PC-3 (cell line): ENCODE measurements at regions of chr7 and their contacts with region 1.

Region 1: DNA sequence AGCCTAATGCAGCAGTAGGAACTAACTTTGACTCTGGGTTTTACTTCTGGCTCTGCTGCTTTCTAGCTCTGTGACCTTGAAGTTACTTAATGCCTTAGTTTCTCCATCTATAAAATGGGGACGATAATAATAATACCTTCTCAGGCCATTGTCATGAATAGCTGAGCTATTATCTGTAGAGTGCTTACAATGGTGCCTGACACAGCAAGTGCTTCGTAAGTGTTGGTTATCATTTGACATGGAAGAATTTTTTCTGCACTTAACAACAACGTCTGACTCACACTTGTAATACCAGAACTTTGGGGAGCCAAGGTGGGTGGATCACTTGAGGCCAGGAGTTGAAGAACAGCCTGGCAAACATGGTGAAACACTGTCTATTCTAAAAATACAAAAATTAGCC is 140.5 kb downstream of the ARL4A start:
- DNase-seq: peak; percentile 36
- ATAC-seq: no peak
- H3K4me3 ChIP-seq: no peak overlapping the region
- H3K27ac ChIP-seq: peak overlapping the region; percentile 58
- H3K4me1 ChIP-seq: peaks cover 16% of the 10 kb centered on the region
- H3K27me3 ChIP-seq: no peaks in the 10 kb centered on the region
- CTCF ChIP-seq: no peak

Region 2: DNA sequence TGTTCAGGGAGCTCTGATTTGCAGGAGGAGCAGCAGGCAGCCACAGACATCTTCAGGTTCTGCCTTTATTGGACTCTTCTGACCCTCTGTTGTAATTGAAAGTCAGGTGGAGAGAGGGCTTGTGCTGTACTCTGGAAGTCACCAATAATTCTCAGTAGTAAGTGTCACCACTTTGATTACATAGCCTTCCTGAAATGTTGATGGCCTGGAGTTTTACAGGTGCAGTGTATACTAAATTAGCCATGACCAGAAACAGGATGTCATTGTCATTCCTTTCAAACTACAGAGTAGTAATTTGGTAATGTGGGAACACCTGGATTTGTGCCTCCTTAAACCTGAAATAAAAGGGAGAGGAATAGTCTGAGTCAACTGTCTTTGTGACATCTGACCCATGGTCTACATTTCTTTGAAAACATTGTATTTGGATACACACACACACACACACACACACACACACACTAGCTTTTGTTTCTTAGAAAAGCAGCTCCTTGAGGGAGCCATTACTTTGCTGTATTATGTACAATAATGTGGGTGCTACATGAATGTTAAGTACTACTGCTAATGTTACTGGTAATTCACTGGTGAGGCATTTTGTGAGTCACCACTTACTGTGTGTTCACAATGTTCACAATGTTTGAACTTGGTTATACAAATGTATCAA is 120.9 kb before region 1 on chr7:
- CTCF ChIA-PET with region 1: no interaction called
- POLR2A ChIA-PET with region 1: no interaction called
- intact Hi-C with region 1: loop called (anchors 2 kb)
- DNase-seq: peak; percentile 91
- ATAC-seq: peak; percentile 84
- H3K4me3 ChIP-seq: peak overlapping the region; percentile 26; the same call in 1 of the 2 replicates
- H3K27ac ChIP-seq: peak overlapping the region; percentile 85
- H3K4me1 ChIP-seq: peaks cover 57% of the 10 kb centered on the region
- H3K27me3 ChIP-seq: no peaks in the 10 kb centered on the region
- CTCF ChIP-seq: no peak

Region 3: DNA sequence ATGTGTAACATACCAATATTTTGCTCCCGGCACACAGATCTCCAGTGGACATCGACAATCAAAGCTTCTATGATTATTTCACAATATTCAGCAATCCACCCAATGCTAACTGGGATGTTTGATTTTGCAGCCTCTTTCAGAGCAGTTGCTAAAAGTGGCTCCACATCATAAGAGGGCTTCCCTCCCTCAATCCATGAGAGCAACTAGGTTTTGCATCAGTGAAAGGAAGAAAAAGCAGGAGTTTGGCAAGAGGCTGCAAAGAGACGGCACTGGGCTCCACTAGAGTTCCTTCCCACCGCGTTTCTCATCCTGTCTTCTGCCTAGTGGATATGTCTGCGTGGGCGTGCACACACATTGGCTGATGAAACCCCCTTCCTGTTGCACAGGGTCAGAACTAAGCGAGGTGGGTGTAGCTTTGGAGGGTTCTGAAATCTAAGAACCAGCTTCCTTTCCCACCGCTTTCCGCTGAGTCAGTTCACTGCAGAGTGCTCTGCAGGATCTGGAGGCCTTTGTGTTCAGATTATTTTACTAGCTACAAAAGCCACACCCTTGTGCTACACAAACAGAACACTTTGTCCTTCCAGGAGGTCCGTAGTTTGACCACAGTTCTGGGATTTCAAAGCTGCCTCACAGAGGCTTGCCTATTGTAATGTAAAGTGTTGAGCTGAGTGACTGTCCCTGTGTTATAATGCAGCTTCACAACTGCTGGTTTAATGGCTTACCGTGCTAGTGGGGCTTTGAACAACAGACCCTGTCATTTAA is 112.4 kb before region 1 on chr7:
- CTCF ChIA-PET with region 1: no interaction called
- POLR2A ChIA-PET with region 1: no interaction called
- intact Hi-C with region 1: loop called (anchors 2 kb)
- DNase-seq: peak; percentile 97
- ATAC-seq: peak; percentile 89
- H3K4me3 ChIP-seq: peak overlapping the region; percentile 55
- H3K27ac ChIP-seq: peak overlapping the region; percentile 93
- H3K4me1 ChIP-seq: peaks cover 74% of the 10 kb centered on the region
- H3K27me3 ChIP-seq: no peaks in the 10 kb centered on the region
- CTCF ChIP-seq: no peak

Region 4: DNA sequence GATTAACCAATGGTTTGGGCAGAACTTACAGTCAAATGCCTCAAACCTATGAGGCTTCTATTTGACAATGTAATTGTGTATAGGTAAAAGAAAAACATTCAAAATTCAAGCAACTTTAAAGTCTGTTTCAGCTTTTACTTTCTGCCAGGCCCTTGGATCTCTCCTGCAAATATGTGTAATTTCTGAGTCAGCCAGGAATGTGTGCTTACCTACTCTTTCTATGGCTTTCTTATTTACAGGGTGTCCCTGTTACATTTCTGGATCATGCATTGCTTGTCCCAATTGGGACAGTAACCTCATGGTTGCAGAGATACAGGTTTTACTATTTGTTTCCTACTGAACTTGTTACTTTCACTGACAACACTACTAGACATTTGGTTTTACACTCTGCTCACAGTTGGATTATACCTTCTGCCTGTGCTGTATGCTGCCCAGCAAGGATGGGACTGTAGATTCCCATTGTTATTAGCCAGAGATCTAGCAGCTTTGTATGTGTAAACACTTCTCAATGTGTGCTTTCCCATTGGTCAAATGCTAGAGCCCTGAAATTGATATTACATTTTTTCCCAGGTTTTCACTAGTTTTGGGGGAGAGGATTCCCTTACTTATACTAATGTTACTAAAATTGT is 214.8 kb after region 1 on chr7:
- CTCF ChIA-PET with region 1: no interaction called
- POLR2A ChIA-PET with region 1: no interaction called
- intact Hi-C with region 1: loop called (anchors 1 kb)
- DNase-seq: peak; percentile 87
- ATAC-seq: peak; percentile 99
- H3K4me3 ChIP-seq: no peak overlapping the region
- H3K27ac ChIP-seq: peak overlapping the region; percentile 68
- H3K4me1 ChIP-seq: peaks cover 26% of the 10 kb centered on the region
- H3K27me3 ChIP-seq: no peaks in the 10 kb centered on the region
- CTCF ChIP-seq: no peak

Region 5: GRCh38 chr7:13117103-13117502 is 289.2 kb after region 1 on chr7:
- CTCF ChIA-PET with region 1: no interaction called
- POLR2A ChIA-PET with region 1: no interaction called
- intact Hi-C with region 1: loop called (anchors 5 kb)
- DNase-seq: peak; percentile 57
- ATAC-seq: peak; percentile 35; the same call in 1 of the 2 replicates
- H3K4me3 ChIP-seq: no peak overlapping the region
- H3K27ac ChIP-seq: no peak overlapping the region
- H3K4me1 ChIP-seq: peaks cover 3% of the 10 kb centered on the region; the same call in 1 of the 2 replicates
- H3K27me3 ChIP-seq: no peaks in the 10 kb centered on the region
- CTCF ChIP-seq: peak; percentile 85